Ascending aorta (tissue), 2 donors: ENCODE measurements at regions of chr9 and their contacts with region 1.

Region 1: GRCh38 chr9:130107234-130107861 is 53.6 kb downstream of the GPR107 start:
- DNase-seq: peak in 1 of 2 donors; percentile 89
- H3K4me3 ChIP-seq: no peak overlapping the region
- H3K27ac ChIP-seq: no peak overlapping the region
- H3K4me1 ChIP-seq: no peaks in the 10 kb centered on the region
- H3K27me3 ChIP-seq: no peaks in the 10 kb centered on the region
- CTCF ChIP-seq: peak; percentile 77 to 81 (median 80)

Region 2: DNA sequence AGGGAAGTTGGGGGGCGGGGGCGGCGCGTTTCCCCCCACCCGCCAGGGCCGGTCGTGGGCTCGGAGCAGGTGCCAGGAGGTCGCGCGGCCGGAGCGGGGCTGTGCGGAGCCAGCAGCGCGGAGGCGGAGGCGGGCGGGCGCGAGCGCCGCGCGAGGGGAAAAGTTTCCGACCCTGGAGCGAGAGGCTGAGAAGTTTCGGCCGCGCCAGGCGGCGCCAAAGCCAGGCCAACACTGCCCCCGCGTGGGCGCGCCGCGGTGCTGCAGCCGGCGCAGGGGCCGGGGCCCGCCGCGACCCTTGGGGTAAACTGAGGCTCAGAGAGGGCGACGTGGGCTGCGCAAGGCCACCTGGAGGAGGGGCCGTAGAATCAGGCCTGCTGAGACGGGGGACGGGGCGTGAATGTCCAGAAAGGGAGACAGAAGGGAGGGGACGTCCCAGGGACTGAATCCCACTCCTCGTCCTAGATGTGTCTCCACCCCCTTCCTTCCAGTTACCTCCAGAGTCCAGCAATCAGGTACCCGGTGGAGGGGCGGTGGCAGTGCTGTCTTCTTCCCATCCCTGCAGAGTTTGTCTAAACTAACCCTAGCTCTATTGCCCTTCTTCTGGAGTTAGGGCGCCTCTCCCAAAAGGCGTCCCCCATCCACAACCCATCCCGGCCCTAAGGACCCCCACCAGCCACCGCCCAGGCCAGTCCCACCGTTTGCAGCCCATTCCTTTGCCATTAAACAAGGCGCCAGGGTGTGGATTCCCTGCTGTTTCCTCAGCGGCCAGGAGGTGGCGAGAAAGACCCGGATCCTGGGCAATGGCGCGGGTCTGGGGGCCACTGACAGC is 496.7 kb before region 1 on chr9:
- intact Hi-C with region 1: no loop called
- DNase-seq: peak in 1 of 2 donors; percentile 90
- H3K4me3 ChIP-seq: peak overlapping the region; percentile 63 to 84
- H3K27ac ChIP-seq: peak overlapping the region; percentile 91 to 92
- H3K4me1 ChIP-seq: peaks cover 5 to 46% of the 10 kb centered on the region in 2 donors
- H3K27me3 ChIP-seq: no peaks in the 10 kb centered on the region
- CTCF ChIP-seq: peak; percentile 74 to 100 (median 81)

Region 3: DNA sequence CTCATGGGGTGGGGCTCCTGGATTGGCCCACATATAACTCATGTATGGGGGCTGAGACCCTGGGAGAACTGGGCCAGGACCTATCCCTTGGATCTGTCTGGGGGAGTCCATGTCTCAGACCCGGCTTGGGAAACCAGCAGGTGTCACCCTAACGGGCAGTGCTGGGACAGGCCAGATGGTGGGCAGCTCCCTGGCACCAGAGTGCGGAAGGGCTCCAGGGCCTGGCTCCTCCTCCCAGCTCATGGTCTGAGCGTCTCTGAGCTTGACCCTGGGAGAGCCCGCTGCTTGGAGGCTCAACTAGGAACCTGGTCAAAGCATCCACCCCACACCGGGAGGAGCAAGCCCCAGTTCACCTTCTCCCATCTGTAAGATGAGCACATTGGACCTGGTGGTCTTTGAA is 49.3 kb after region 1 on chr9:
- intact Hi-C with region 1: loop called (anchors 5 kb)
- DNase-seq: peak in 1 of 2 donors; percentile 79
- H3K4me3 ChIP-seq: no peak overlapping the region
- H3K27ac ChIP-seq: no peak overlapping the region
- H3K4me1 ChIP-seq: no peaks in the 10 kb centered on the region
- H3K27me3 ChIP-seq: no peaks in the 10 kb centered on the region
- CTCF ChIP-seq: peak; percentile 48 to 62 (median 54)

Region 4: DNA sequence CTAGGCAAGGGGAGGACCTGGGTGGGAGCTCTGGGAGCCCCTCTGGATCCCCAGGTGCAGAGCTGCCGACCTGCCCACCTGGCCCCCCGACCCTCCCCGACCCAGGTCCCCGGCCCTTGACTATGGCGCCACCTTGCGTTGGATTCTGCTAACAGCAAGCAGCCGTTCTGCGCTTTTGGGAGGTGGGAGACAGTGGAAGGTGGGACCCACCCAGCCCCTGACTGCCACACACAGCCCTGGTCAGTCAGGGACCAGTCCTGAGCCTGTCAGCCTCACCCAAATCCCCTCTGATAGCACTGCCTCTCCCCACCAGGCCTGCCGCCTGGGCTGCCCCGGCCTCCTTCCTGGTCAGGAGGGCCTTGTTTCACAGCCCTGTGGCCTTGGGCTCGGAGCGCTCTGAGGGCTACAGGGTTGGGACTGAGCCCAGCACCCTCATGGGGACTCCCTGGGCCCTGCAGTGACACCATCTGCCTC is 236.1 kb after region 1 on chr9:
- intact Hi-C with region 1: loop called (anchors 5 kb)
- DNase-seq: no peak
- H3K4me3 ChIP-seq: no peak overlapping the region
- H3K27ac ChIP-seq: no peak overlapping the region
- H3K4me1 ChIP-seq: no peaks in the 10 kb centered on the region
- H3K27me3 ChIP-seq: no peaks in the 10 kb centered on the region
- CTCF ChIP-seq: peak; percentile 45 to 67 (median 65)

Region 5: DNA sequence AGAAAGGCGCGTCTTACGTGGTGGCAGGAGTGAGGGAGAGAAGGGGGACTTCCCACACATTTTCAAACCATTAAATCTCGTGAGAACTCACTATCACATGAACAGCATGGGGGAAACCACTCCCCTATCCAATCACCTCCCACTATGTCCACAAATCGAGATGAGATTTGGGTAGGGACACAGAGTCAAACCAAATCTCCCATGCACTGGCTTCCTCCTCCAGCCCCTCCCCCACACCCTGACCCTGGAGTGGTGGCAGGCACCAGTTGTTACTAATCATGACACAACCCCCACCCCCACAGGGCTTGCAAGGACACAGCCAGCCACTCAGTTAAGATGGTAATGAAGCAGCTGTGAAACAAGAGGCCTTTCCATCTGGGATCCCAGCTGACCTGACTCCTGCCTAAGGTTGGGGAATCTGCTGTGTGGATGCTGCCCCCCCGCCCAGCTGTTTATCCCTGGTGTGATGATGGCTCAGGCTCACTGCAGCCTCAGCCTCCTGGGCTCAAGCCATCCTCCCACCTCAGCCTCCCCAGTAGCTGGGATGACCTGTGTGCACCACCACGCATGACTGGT is 415.0 kb after region 1 on chr9:
- intact Hi-C with region 1: no loop called
- DNase-seq: no peak
- H3K4me3 ChIP-seq: no peak overlapping the region
- H3K27ac ChIP-seq: no peak overlapping the region
- H3K4me1 ChIP-seq: no peaks in the 10 kb centered on the region
- H3K27me3 ChIP-seq: no peaks in the 10 kb centered on the region
- CTCF ChIP-seq: no peak